HEK293 (cell line): ENCODE measurements at regions of chr11 and their contacts with region 1.

Region 1: DNA sequence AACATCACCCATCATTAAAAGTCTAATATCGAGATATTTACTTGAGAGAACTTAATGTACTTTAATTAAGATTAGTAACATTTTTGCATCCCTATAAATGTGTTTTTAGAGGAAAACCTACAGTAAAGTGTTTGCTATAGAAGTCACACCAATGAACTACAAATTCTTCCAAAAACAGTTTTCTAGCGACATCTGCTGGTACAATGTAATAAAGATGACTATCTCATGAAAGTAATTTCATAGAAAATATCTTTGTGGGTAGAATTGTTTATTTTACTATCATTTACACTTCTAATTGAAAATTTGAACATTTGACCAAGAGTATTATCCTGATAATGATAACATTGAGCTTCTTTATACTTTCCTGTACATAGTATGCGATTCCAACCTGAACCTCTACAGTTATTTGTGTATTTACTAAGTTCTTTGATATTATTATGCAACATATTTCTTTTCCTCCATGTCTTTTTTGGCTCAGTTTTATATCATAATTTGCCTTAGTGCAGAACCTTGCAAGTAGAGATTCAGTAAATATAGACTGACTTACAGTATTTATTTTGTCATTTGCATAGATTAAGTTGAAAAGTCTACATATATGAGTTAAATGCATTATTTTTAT is 252.7 kb downstream of the TMEM135 start:
- H3K4me3 ChIP-seq: no peak overlapping the region
- H3K27ac ChIP-seq: no peak overlapping the region
- H3K4me1 ChIP-seq: no peaks in the 10 kb centered on the region
- CTCF ChIP-seq: no peak

Region 2: GRCh38 chr11:87300640-87301380 is 10.4 kb after region 1 on chr11:
- CTCF ChIA-PET with region 1: interaction called, 21 read pairs
- POLR2A ChIA-PET with region 1: no interaction called
- H3K4me3 ChIP-seq: no peak overlapping the region
- H3K27ac ChIP-seq: no peak overlapping the region
- H3K4me1 ChIP-seq: no peaks in the 10 kb centered on the region
- CTCF ChIP-seq: no peak

Region 3: GRCh38 chr11:87398931-87399330 is 108.5 kb after region 1 on chr11:
- CTCF ChIA-PET with region 1: no interaction called
- POLR2A ChIA-PET with region 1: no interaction called
- H3K4me3 ChIP-seq: no peak overlapping the region
- H3K27ac ChIP-seq: no peak overlapping the region
- H3K4me1 ChIP-seq: no peaks in the 10 kb centered on the region
- CTCF ChIP-seq: no peak

Region 4: DNA sequence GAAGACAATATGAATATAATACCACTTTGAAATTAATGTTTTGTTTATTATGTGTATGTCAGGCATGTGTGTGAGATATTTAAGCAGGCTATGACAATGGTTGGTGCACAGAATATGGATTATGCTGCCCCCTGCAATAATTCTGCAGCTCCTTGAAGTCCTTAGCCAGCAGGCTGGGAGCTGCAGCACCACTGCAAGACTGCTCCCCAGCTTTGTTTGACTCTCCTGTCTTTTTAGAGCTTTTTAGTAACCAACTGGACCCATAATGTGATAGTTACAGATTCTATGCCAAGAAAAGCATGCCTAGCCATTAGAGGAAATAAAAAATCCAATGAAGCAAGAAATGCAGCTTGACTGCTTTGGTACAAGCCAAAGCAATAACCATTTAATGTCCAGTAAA is 282.5 kb after region 1 on chr11:
- CTCF ChIA-PET with region 1: no interaction called
- POLR2A ChIA-PET with region 1: no interaction called
- H3K4me3 ChIP-seq: no peak overlapping the region
- H3K27ac ChIP-seq: no peak overlapping the region
- H3K4me1 ChIP-seq: no peaks in the 10 kb centered on the region
- CTCF ChIP-seq: no peak